BJ (cell line): ENCODE measurements at regions of chr2 and their contacts with region 1.

Region 1: GRCh38 chr2:84888401-84889276 is 7.8 kb upstream of the TRABD2A start:
- DNase-seq: no peak
- H3K4me3 ChIP-seq: no peak overlapping the region
- H3K27me3 ChIP-seq: no peaks in the 10 kb centered on the region
- CTCF ChIP-seq: no peak

Region 2: GRCh38 chr2:84559838-84560237 is 328.8 kb before region 1 on chr2:
- CTCF ChIA-PET with region 1: no interaction called
- POLR2A ChIA-PET with region 1: no interaction called
- DNase-seq: no peak
- H3K4me3 ChIP-seq: no peak overlapping the region
- H3K27me3 ChIP-seq: no peaks in the 10 kb centered on the region
- CTCF ChIP-seq: no peak

Region 3: GRCh38 chr2:84874381-84875212 is 14.0 kb before region 1 on chr2:
- CTCF ChIA-PET with region 1: interaction called, 6 read pairs
- POLR2A ChIA-PET with region 1: interaction called, 13 read pairs
- DNase-seq: no peak
- H3K4me3 ChIP-seq: no peak overlapping the region
- H3K27me3 ChIP-seq: peaks cover 3% of the 10 kb centered on the region; the same call in 1 of the 2 replicates
- CTCF ChIP-seq: no peak